ENCODE measurements at regions of chr22 and their contacts with region 1.

Region 1: DNA sequence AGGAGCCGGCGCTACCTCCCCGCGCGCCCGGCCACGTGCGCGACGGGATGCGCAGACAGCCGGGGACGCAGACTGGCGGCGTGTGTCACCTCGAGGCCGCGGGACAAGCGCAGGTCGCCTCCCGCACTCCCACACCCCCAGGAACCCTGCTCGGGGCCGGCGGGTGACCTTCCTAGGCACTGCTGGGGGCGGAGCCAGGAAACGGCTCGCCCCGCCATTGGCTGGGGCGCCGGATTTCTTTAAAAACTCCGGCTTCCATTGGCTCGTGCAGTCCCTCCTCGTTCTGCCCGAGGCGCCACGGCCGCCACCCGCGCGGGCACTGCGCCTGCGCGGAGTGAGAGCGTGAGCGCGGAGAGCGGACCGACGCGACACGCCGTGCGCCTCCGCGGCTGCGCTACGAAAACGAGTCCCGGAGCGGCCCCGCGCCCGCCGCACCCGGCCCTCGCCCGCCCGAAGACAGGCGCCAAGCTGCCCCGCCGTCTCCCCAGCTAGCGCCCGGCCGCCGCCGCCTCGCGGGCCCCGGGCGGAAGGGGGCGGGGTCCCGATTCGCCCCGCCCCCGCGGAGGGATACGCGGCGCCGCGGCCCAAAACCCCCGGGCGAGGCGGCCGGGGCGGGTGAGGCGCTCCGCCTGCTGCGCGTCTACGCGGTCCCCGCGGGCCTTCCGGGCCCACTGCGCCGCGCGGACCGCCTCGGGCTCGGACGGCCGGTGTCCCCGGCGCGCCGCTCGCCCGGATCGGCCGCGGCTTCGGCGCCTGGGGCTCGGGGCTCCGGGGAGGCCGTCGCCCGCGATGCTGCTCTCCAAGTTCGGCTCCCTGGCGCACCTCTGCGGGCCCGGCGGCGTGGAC is at the start of gene PIM3:
- DNase-seq: peak; percentile 94
- H3K4me3 Mint-ChIP-seq: peak within 1 kb of the TSS; percentile 85
- H3K27ac Mint-ChIP-seq: peak within 1 kb of the TSS; percentile 83
- H3K4me1 Mint-ChIP-seq: peaks cover 36% of the 10 kb centered on the region
- H3K27me3 Mint-ChIP-seq: no peaks in the 10 kb centered on the region
- total RNA-seq, gene PIM3: 60.1 to 62.3 TPM

Region 2: GRCh38 chr22:49827853-49828598 is 132.4 kb before region 1 on chr22 and contains the start of gene BRD1:
- CTCF ChIA-PET with region 1: no interaction called
- POLR2A ChIA-PET with region 1: interaction called, 10 read pairs
- DNase-seq: peak; percentile 68
- H3K4me3 Mint-ChIP-seq: peak within 1 kb of the TSS; percentile 92
- H3K27ac Mint-ChIP-seq: peak within 1 kb of the TSS; percentile 99
- H3K4me1 Mint-ChIP-seq: peaks cover 61% of the 10 kb centered on the region
- H3K27me3 Mint-ChIP-seq: no peaks in the 10 kb centered on the region
- total RNA-seq, gene BRD1: 54.7 to 55.4 TPM

Region 3: GRCh38 chr22:49930739-49931412 is 29.5 kb before region 1 on chr22:
- CTCF ChIA-PET with region 1: interaction called, 11 read pairs
- POLR2A ChIA-PET with region 1: interaction called, 55 read pairs
- DNase-seq: peak; percentile 58
- H3K4me3 Mint-ChIP-seq: no peak overlapping the region
- H3K27ac Mint-ChIP-seq: peak overlapping the region; percentile 37
- H3K4me1 Mint-ChIP-seq: peaks cover 48% of the 10 kb centered on the region
- H3K27me3 Mint-ChIP-seq: no peaks in the 10 kb centered on the region

Region 4: GRCh38 chr22:49936018-49936952 is 24.1 kb before region 1 on chr22:
- CTCF ChIA-PET with region 1: interaction called, 11 read pairs
- POLR2A ChIA-PET with region 1: interaction called, 55 read pairs
- DNase-seq: peak; percentile 95
- H3K4me3 Mint-ChIP-seq: peak overlapping the region; percentile 59
- H3K27ac Mint-ChIP-seq: peak overlapping the region; percentile 79
- H3K4me1 Mint-ChIP-seq: peaks cover 38% of the 10 kb centered on the region
- H3K27me3 Mint-ChIP-seq: no peaks in the 10 kb centered on the region

Region 5: DNA sequence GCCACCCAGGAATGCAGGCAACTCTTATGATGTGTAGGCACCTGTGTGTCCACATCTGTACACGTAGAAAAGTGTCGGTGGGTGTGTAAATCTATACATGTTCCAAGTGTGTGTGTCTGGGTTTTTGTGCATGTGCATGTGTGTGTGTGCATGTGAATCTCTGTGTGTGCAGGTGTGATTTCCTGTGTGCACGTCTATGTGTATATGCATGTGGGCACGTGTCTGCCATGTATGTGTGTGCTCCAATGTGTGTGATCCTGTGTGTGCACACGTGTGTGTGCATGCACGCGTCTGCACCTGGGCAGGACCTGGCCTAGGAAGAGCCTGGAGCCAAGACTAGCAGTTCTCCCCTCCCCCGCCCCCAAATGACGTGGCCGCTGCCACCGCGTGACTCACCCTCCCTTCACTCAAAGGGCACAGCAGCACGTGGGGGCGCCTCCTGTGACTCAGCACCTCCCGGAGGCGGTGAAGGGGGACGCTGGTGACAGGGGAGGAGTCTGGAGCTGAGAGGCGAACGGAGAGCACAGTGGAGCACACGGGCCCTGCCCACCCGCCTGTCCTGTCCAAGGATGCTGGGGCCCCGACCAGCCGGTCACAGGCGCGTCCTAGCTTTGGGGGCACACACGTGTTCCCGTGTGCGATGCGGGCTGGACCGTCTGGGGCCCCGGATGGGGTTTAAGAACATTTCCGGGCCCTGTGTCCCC is 10.3 kb after region 1 on chr22:
- CTCF ChIA-PET with region 1: interaction called, 5 read pairs
- POLR2A ChIA-PET with region 1: interaction called, 51 read pairs
- DNase-seq: peak; percentile 96
- H3K4me3 Mint-ChIP-seq: peak overlapping the region; percentile 79
- H3K27ac Mint-ChIP-seq: peak overlapping the region; percentile 90
- H3K4me1 Mint-ChIP-seq: peaks cover 24% of the 10 kb centered on the region
- H3K27me3 Mint-ChIP-seq: no peaks in the 10 kb centered on the region

Region 6: GRCh38 chr22:50010676-50011446 is 50.5 kb after region 1 on chr22:
- CTCF ChIA-PET with region 1: no interaction called
- POLR2A ChIA-PET with region 1: no interaction called
- DNase-seq: no peak
- H3K4me3 Mint-ChIP-seq: no peak overlapping the region
- H3K27ac Mint-ChIP-seq: no peak overlapping the region
- H3K4me1 Mint-ChIP-seq: peaks cover 15% of the 10 kb centered on the region
- H3K27me3 Mint-ChIP-seq: peaks cover 19% of the 10 kb centered on the region

Region 7: GRCh38 chr22:50136581-50137015 is 176.2 kb after region 1 on chr22:
- CTCF ChIA-PET with region 1: no interaction called
- POLR2A ChIA-PET with region 1: no interaction called
- DNase-seq: no peak
- H3K4me3 Mint-ChIP-seq: no peak overlapping the region
- H3K27ac Mint-ChIP-seq: no peak overlapping the region
- H3K4me1 Mint-ChIP-seq: peaks cover 2% of the 10 kb centered on the region
- H3K27me3 Mint-ChIP-seq: peaks cover 30% of the 10 kb centered on the region